Activated CD4-positive, alpha-beta T cell treated with anti-CD3 and anti-CD28 coated beads for 36 hours (primary cell): ENCODE measurements at regions of chr1 and their contacts with region 1.

Region 1: DNA sequence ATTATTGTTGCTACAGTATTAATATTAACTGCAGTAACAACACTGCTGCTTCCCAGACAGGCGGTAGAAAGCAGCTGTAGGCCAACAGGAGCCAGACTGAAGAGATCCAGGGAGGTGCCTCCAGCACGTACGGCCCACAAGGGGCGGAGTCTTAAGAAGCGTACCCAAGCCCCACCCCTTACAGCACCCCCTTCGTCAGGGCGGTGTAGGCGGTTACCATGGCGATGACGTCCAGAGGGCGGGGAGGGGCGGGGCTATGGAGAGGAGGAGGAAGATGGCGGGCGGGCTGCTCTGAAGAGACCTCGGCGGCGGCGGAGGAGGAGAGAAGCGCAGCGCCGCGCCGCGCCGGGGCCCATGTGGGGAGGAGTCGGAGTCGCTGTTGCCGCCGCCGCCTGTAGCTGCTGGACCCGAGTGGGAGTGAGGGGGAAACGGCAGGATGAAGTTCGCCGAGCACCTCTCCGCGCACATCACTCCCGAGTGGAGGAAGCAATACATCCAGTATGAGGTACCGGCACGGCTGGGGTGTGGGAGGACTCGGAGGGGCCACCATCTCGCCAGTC is at the start of gene XPR1:
- DNase-seq: peak; percentile 99
- ATAC-seq: peak; percentile 99
- H3K4me3 Mint-ChIP-seq: no peak within 1 kb of the TSS
- H3K27ac Mint-ChIP-seq: peak within 1 kb of the TSS; percentile 76
- H3K4me1 Mint-ChIP-seq: peaks cover 9% of the 10 kb centered on the region
- H3K27me3 Mint-ChIP-seq: peaks cover 3% of the 10 kb centered on the region
- total RNA-seq, gene XPR1: 18.4 to 25.2 TPM

Region 2: GRCh38 chr1:179882243-179883039 is 749.4 kb before region 1 on chr1 and contains the start of gene TOR1AIP1:
- CTCF ChIA-PET with region 1: no interaction called
- POLR2A ChIA-PET with region 1: no interaction called
- intact Hi-C with region 1: loop called in 1 of 2 experiments (anchors 5 kb)
- DNase-seq: peak; percentile 98
- ATAC-seq: peak; percentile 80
- H3K4me3 Mint-ChIP-seq: peak within 1 kb of the TSS; percentile 87
- H3K27ac Mint-ChIP-seq: peak within 1 kb of the TSS; percentile 98
- H3K4me1 Mint-ChIP-seq: peaks cover 59% of the 10 kb centered on the region
- H3K27me3 Mint-ChIP-seq: no peaks in the 10 kb centered on the region
- total RNA-seq, gene TOR1AIP1: 50.1 to 71.6 TPM

Region 3: DNA sequence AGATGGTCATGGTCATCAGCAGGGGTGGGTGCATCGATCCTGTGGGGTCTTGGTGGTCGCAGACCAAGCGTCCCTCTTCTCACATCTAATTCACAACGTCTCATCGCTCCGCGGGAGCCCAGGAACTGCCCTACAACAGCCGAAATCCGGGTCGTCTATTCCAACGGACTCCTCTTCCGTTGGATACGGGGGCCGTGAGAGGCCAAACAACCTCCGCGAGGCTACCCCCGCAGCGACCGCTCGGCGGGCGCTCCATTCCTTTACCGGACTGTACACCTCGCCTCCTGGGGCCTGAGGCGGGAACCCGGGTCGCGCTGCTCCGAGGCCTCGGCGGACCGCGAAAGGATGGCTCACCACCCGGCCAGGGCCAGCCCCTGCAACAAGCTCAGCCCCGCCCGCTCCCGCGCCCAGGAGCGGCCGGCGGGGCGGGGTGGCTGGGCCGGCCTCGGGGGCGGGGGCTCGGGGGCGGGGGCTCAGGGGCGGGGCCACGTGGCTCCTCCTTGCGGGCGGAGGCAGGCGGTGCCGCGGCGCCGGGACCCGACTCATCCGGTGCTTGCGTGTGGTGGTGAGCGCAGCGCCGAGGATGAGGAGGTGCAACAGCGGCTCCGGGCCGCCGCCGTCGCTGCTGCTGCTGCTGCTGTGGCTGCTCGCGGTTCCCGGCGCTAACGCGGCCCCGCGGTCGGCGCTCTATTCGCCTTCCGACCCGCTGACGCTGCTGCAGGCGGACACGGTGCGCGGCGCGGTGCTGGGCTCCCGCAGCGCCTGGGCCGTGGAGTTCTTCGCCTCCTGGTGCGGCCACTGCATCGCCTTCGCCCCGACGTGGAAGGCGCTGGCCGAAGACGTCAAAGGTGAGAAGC is 477.3 kb before region 1 on chr1 and contains the start of gene QSOX1:
- CTCF ChIA-PET with region 1: no interaction called
- POLR2A ChIA-PET with region 1: no interaction called
- intact Hi-C with region 1: loop called in 1 of 2 experiments (anchors 2 kb)
- DNase-seq: peak; percentile 95
- ATAC-seq: peak; percentile 97
- H3K4me3 Mint-ChIP-seq: peak within 1 kb of the TSS; percentile 90
- H3K27ac Mint-ChIP-seq: peak within 1 kb of the TSS; percentile 85
- H3K4me1 Mint-ChIP-seq: peaks cover 25% of the 10 kb centered on the region
- H3K27me3 Mint-ChIP-seq: no peaks in the 10 kb centered on the region
- total RNA-seq, gene QSOX1: 18.3 to 31.6 TPM

Region 4: DNA sequence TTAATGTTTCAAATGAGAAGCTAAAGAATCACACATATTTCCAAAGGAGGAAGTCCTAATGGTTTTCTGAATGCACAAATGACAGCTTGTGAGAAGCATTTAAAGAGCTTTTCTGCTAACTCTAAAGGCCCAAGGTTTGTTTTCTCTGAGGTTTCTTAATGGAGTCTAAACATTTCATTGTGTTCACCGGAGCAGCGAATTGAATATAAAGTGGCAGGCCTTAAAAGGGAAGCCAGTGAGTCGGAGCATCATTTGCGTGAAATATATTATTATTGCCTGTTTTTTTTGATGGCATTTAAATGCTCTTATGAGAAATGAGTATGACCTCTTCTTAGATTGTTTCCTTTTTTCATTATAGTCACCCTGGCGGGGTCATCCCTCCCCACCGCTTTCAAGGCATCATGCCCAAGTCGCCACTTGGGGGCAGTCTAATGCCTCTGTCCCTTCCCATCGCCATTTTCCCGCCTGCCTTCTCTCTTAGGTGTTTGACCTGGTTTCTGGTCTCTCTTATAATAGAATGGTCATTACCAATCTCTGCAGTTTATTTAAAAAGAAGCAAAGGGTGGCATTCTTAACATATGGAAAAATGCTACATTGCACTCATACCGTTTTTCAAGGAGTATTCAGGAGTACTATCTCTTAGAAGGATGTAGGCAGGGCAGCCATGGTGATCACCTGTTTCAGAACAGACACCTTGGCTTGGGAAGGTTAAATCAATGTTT is 98.4 kb before region 1 on chr1:
- CTCF ChIA-PET with region 1: no interaction called
- POLR2A ChIA-PET with region 1: no interaction called
- intact Hi-C with region 1: loop called (anchors 5 kb)
- DNase-seq: peak; percentile 86
- ATAC-seq: peak; percentile 81
- H3K4me3 Mint-ChIP-seq: no peak overlapping the region
- H3K27ac Mint-ChIP-seq: no peak overlapping the region
- H3K4me1 Mint-ChIP-seq: no peaks in the 10 kb centered on the region
- H3K27me3 Mint-ChIP-seq: peaks cover 4% of the 10 kb centered on the region

Region 5: GRCh38 chr1:180863158-180863775 is 231.4 kb after region 1 on chr1:
- CTCF ChIA-PET with region 1: interaction called, 5 read pairs
- POLR2A ChIA-PET with region 1: no interaction called
- intact Hi-C with region 1: loop called (anchors 5 kb)
- DNase-seq: peak; percentile 42
- ATAC-seq: no peak
- H3K4me3 Mint-ChIP-seq: no peak overlapping the region
- H3K27ac Mint-ChIP-seq: no peak overlapping the region
- H3K4me1 Mint-ChIP-seq: no peaks in the 10 kb centered on the region
- H3K27me3 Mint-ChIP-seq: no peaks in the 10 kb centered on the region

Region 6: GRCh38 chr1:182029379-182030331 is 1397.8 kb after region 1 on chr1:
- CTCF ChIA-PET with region 1: no interaction called
- POLR2A ChIA-PET with region 1: no interaction called
- intact Hi-C with region 1: loop called in 1 of 2 experiments (anchors 5 kb)
- DNase-seq: peak; percentile 99
- ATAC-seq: peak; percentile 96
- H3K4me3 Mint-ChIP-seq: peak overlapping the region; percentile 86
- H3K27ac Mint-ChIP-seq: peak overlapping the region; percentile 97
- H3K4me1 Mint-ChIP-seq: peaks cover 11% of the 10 kb centered on the region
- H3K27me3 Mint-ChIP-seq: no peaks in the 10 kb centered on the region